Activated B cell treated with CpG ODN at 0.5 μM for 24 hours (primary cell): ENCODE measurements at regions of chr1 and their contacts with region 1.

Region 1: DNA sequence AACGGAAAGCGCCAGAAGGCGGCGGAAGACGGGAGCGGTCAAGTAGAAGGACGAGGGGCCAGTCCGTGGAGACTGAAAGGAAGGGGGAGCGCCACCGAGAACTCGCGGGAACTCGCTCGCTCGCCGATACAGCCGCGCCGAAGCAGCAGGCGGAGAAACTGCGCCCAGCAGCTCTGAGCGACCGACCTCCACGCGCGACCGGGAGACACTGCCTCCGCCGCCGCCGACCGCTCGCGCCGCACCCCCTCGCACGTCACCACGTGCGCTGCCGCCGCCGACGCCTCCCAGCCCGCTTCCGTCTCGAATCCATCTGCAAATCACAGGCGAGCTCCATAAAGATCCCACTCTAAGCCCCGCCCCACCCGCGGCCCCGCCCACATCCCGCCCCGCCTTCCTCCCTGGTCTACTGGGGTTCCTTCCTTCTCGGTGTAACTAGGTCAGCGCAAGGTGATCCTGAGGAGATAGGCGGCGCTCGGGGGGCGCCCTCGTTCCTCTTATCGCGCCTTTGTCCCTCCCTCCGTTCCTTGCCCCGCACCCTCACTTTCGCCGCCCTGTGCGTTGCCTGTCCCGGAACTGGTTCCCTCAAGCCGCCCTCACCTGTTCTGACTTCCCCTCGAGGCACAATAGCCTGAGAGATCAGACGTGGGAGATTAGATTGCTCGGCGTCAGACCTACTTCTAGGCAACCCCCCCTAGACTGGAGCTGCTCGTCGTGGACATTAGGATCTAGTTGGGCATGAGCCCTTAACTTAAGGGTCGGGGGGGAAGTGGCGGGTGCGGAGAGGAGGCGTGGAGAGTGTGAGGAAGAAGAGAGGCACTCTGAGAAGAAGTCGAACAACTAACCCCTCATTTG is at the start of gene IVNS1ABP:
- DNase-seq: peak; percentile 90
- ATAC-seq: peak; percentile 73
- H3K4me3 Mint-ChIP-seq: peak within 1 kb of the TSS; percentile 97
- H3K27ac Mint-ChIP-seq: peak within 1 kb of the TSS; percentile 98
- H3K4me1 Mint-ChIP-seq: peaks cover 49% of the 10 kb centered on the region
- H3K27me3 Mint-ChIP-seq: no peaks in the 10 kb centered on the region
- CTCF ChIP-seq: no peak
- total RNA-seq, gene IVNS1ABP: 130 and 149 TPM in 2 replicates

Region 2: GRCh38 chr1:184754476-184755225 is 562.6 kb before region 1 on chr1 and contains the start of gene EDEM3:
- CTCF ChIA-PET with region 1: no interaction called
- POLR2A ChIA-PET with region 1: interaction called, 4 read pairs
- intact Hi-C with region 1: loop called (anchors 1 kb)
- DNase-seq: peak; percentile 90
- ATAC-seq: peak; percentile 95
- H3K4me3 Mint-ChIP-seq: peak within 1 kb of the TSS; percentile 95
- H3K27ac Mint-ChIP-seq: peak within 1 kb of the TSS; percentile 86
- H3K4me1 Mint-ChIP-seq: peaks cover 23% of the 10 kb centered on the region
- H3K27me3 Mint-ChIP-seq: peaks cover under 1% of the 10 kb centered on the region
- CTCF ChIP-seq: no peak
- total RNA-seq, gene EDEM3: 11.5 and 16.2 TPM in 2 replicates

Region 3: GRCh38 chr1:185291652-185292051 is 25.6 kb before region 1 on chr1:
- CTCF ChIA-PET with region 1: interaction called, 6 read pairs
- POLR2A ChIA-PET with region 1: interaction called, 7 read pairs
- intact Hi-C with region 1: loop called (anchors 2 kb)
- DNase-seq: no peak
- ATAC-seq: peak; percentile 47
- H3K4me3 Mint-ChIP-seq: no peak overlapping the region
- H3K27ac Mint-ChIP-seq: peak overlapping the region; percentile 53
- H3K4me1 Mint-ChIP-seq: peaks cover 26% of the 10 kb centered on the region
- H3K27me3 Mint-ChIP-seq: no peaks in the 10 kb centered on the region
- CTCF ChIP-seq: no peak

Region 4: GRCh38 chr1:185439727-185440415 is 122.6 kb after region 1 on chr1:
- CTCF ChIA-PET with region 1: no interaction called
- POLR2A ChIA-PET with region 1: no interaction called
- intact Hi-C with region 1: loop called (anchors 2 kb)
- DNase-seq: no peak
- ATAC-seq: peak; percentile 75
- H3K4me3 Mint-ChIP-seq: no peak overlapping the region
- H3K27ac Mint-ChIP-seq: no peak overlapping the region
- H3K4me1 Mint-ChIP-seq: peaks cover 3% of the 10 kb centered on the region
- H3K27me3 Mint-ChIP-seq: no peaks in the 10 kb centered on the region
- CTCF ChIP-seq: no peak

Region 5: DNA sequence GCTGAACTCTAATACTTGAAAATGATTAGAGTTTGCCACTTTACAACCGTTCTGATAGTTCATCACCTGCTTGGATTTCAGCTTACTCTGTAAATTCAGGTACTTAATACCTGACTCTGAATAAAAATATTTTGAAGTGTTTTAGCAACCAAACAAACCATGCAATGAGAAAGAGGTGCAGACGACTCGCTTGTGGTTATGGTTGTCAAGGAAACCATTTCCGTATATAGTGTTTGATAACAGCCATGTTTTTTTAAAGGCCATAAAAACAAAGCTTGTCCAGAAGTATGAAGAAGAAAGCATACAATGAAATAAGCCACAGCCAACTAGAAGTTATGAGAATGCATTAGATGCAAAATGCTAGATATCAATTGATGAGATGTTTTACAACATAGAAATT is 249.7 kb after region 1 on chr1:
- CTCF ChIA-PET with region 1: no interaction called
- POLR2A ChIA-PET with region 1: interaction called, 43 read pairs
- intact Hi-C with region 1: loop called (anchors 1 kb)
- DNase-seq: no peak
- ATAC-seq: peak; percentile 80
- H3K4me3 Mint-ChIP-seq: peak overlapping the region; percentile 13
- H3K27ac Mint-ChIP-seq: peak overlapping the region; percentile 74
- H3K4me1 Mint-ChIP-seq: peaks cover 30% of the 10 kb centered on the region
- H3K27me3 Mint-ChIP-seq: no peaks in the 10 kb centered on the region
- CTCF ChIP-seq: no peak

Region 6: GRCh38 chr1:185636848-185637247 is 319.6 kb after region 1 on chr1:
- CTCF ChIA-PET with region 1: no interaction called
- POLR2A ChIA-PET with region 1: interaction called, 16 read pairs
- intact Hi-C with region 1: no loop called
- DNase-seq: no peak
- ATAC-seq: peak; percentile 87
- H3K4me3 Mint-ChIP-seq: no peak overlapping the region
- H3K27ac Mint-ChIP-seq: peak overlapping the region; percentile 46
- H3K4me1 Mint-ChIP-seq: peaks cover 25% of the 10 kb centered on the region
- H3K27me3 Mint-ChIP-seq: no peaks in the 10 kb centered on the region
- CTCF ChIP-seq: no peak

Region 7: DNA sequence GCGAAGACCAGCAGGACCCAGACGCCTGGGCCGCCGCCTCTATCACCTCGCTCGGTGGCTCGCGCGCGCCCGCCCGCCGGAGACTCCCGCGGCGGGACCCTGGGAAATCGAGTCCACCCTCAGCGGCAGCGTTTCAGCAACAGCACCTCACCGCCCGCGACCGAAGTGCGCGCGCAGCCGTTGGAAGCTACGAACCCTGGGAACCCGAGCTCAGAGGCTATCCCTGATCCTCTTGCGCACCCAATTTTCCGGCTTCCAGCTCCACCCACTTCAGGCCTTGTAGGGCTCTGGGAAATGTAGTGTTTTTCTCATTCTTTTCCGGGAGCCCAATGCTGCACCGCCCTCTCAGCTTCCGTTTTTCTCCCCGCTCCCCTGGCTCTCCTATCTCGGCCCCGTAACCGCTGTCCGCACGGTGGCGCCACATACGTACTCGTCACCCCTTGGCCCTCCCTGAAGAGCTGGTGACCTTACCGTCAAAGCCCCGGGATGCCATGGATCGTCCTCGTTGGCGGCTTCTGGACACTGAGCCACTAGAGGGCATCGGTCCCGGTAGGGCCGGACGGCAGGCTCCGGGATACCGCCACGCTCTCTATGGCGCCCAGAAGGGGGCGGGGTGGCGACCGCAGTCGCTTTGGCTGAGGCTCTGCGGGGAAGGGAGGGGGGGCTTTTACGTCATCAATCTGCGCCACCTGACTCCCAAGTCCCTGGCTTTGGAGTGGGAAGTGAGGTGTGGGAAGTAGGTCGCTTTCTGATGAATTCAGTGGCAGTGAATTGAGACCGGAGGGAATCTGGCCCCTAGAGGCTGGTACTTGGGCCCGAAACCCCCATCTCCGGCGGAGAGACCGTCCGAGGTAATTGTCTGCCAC is 1058.1 kb after region 1 on chr1 and contains the starts of genes ODR4 and TPR:
- CTCF ChIA-PET with region 1: no interaction called
- POLR2A ChIA-PET with region 1: interaction called, 3 read pairs
- intact Hi-C with region 1: loop called (anchors 1 kb)
- DNase-seq: peak; percentile 93
- ATAC-seq: peak; percentile 82
- H3K4me3 Mint-ChIP-seq: peak within 1 kb of the TSS; percentile 92
- H3K27ac Mint-ChIP-seq: peak within 1 kb of the TSS; percentile 92
- H3K4me1 Mint-ChIP-seq: peaks cover 31% of the 10 kb centered on the region
- H3K27me3 Mint-ChIP-seq: no peaks in the 10 kb centered on the region
- CTCF ChIP-seq: peak; percentile 53
- total RNA-seq, gene ODR4: 11.9 and 15.6 TPM in 2 replicates
- total RNA-seq, gene TPR: 112 and 125 TPM in 2 replicates